IMR-90 (cell line): ENCODE measurements at regions of chr11 and their contacts with region 1.

Region 1: DNA sequence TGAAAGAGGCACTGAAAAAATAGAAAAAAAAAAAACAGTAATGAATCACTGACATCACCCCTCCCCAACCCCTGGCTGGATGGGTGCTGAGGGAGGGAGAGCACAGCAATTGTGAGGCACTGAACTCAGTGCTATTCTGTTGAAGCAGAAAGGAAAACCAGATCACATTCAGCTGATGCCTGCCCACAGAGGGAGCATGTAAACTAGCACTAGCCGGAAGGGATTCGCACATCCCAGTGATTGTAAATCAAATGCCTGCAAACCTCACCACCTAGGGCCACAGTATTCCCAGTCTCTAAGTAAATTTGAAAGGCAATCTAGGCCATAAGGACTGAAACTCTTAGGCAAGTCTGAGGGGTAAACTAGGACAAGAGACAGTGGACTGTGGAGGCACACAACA is 772.0 kb upstream of the CCDC179 start:
- DNase-seq: no peak
- ATAC-seq: no peak
- H3K4me3 ChIP-seq: no peak overlapping the region
- H3K27ac ChIP-seq: no peak overlapping the region
- H3K4me1 ChIP-seq: no peaks in the 10 kb centered on the region
- H3K27me3 ChIP-seq: no peaks in the 10 kb centered on the region
- CTCF ChIP-seq: no peak
- POLR2A ChIP-seq: no peak
- RAD21 ChIP-seq: no peak

Region 2: DNA sequence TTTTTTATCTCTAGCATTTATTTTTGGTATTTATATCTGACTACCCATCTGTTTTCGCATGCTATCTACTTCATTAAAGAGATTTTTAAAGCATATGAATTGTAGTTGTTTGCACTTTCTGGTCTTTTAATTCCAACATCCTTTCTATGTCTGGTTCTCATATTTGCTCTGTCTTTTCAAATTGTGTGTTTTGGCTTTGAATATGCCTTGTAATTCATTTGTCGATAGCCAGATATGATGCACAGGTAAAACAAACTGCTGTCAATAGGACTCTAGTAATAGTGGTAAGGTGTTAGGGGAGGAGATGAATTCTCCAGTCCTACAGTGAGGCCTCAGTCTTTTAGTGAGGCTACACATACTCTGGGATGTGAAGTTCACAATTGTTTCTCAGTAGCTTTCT is 241.3 kb before region 1 on chr11:
- CTCF ChIA-PET with region 1: no interaction called
- POLR2A ChIA-PET with region 1: no interaction called
- dilution Hi-C with region 1: no loop called
- in situ Hi-C with region 1: no loop called
- intact Hi-C with region 1: no loop called
- DNase-seq: no peak
- ATAC-seq: no peak
- H3K4me3 ChIP-seq: no peak overlapping the region
- H3K27ac ChIP-seq: no peak overlapping the region
- H3K4me1 ChIP-seq: no peaks in the 10 kb centered on the region
- H3K27me3 ChIP-seq: no peaks in the 10 kb centered on the region
- CTCF ChIP-seq: no peak
- POLR2A ChIP-seq: no peak
- RAD21 ChIP-seq: no peak

Region 3: DNA sequence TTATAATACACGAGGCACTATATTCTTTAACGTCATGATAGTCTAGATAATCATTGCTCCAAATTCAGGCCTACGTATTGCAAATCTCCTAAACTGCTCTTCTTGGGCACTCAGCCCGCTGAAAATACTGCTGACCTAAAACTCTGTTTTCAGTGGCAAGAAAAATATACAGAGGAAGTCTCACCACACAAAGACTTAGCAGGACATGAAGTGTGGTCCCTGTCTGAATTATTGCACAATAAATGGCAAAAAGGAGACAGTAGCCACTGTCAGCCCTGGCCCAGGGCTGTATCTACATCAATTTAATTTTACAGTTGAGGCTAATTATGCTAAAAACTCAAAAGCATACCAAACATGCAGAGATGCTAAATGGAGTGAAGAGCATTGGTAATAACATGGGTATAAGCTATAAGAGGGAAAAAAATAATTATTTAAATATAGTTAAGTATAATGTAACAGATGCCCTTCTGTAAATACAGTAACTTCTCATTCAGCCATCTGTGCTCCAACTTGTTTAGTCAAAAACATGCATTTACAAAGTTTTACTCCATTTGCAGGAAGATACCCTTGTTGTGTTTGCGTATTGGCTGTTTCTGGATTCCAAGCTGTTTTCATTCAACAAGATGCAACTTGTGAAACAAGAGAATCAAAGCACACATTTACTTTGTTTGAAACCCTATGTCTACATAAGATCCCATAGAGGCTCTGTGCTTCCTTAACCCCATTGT is 64.6 kb after region 1 on chr11:
- CTCF ChIA-PET with region 1: no interaction called
- POLR2A ChIA-PET with region 1: no interaction called
- dilution Hi-C with region 1: no loop called
- in situ Hi-C with region 1: loop called (anchors 10 kb)
- intact Hi-C with region 1: no loop called
- DNase-seq: no peak
- ATAC-seq: no peak
- H3K4me3 ChIP-seq: no peak overlapping the region
- H3K27ac ChIP-seq: no peak overlapping the region
- H3K4me1 ChIP-seq: no peaks in the 10 kb centered on the region
- H3K27me3 ChIP-seq: no peaks in the 10 kb centered on the region
- CTCF ChIP-seq: no peak
- POLR2A ChIP-seq: no peak
- RAD21 ChIP-seq: no peak